Common myeloid progenitor, CD34-positive (primary cell): ENCODE measurements at regions of chr1 and their contacts with region 1.

Region 1: DNA sequence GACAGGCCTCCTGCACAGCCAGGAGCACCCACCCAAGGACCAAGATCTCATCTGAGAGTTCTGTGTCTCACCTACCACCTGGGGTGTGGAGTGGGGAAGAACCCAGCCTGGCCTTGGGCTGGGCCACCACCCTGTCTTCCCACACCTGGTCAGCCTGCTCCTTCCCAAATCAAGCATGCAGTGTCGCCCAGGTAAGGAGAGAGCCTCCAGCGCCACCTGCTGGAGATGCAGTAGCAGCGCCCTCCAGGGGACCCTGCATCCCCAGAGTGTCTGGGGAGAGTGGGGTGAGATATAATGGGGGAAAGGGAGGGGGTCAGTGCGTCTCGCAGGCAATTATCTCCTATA is 32.3 kb downstream of the KIAA2013 start:
- DNase-seq: peak; percentile 39 to 63 (median 51)
- H3K4me3 ChIP-seq: no peak overlapping the region
- H3K27ac ChIP-seq: no peak overlapping the region
- H3K4me1 ChIP-seq: no peaks in the 10 kb centered on the region
- H3K27me3 ChIP-seq: peaks cover 0 to 19% (median 14%) of the 10 kb centered on the region in 5 experiments

Region 2: GRCh38 chr1:11838349-11839272 is 55.3 kb before region 1 on chr1:
- CTCF ChIA-PET with region 1: interaction called, 97 read pairs
- POLR2A ChIA-PET with region 1: no interaction called
- DNase-seq: peak; percentile 56 to 78 (median 70)
- H3K4me3 ChIP-seq: no peak overlapping the region
- H3K27ac ChIP-seq: no peak overlapping the region
- H3K4me1 ChIP-seq: peaks cover 8 to 37% (median 33%) of the 10 kb centered on the region in 4 experiments
- H3K27me3 ChIP-seq: no peaks in the 10 kb centered on the region

Region 3: GRCh38 chr1:11845641-11846335 is 48.1 kb before region 1 on chr1:
- CTCF ChIA-PET with region 1: interaction called, 97 read pairs
- POLR2A ChIA-PET with region 1: no interaction called
- DNase-seq: peak; percentile 14 to 50 (median 43)
- H3K4me3 ChIP-seq: no peak overlapping the region
- H3K27ac ChIP-seq: no peak overlapping the region
- H3K4me1 ChIP-seq: peaks cover 8 to 44% (median 33%) of the 10 kb centered on the region in 4 experiments
- H3K27me3 ChIP-seq: no peaks in the 10 kb centered on the region

Region 4: GRCh38 chr1:11880911-11881748 is 12.7 kb before region 1 on chr1:
- CTCF ChIA-PET with region 1: interaction called, 10 read pairs
- POLR2A ChIA-PET with region 1: no interaction called
- DNase-seq: no peak
- H3K4me3 ChIP-seq: no peak overlapping the region
- H3K27ac ChIP-seq: no peak overlapping the region
- H3K4me1 ChIP-seq: peaks cover 0 to 8% (median 7%) of the 10 kb centered on the region in 4 experiments
- H3K27me3 ChIP-seq: peaks cover 0 to 2% (median 0%) of the 10 kb centered on the region in 5 experiments

Region 5: DNA sequence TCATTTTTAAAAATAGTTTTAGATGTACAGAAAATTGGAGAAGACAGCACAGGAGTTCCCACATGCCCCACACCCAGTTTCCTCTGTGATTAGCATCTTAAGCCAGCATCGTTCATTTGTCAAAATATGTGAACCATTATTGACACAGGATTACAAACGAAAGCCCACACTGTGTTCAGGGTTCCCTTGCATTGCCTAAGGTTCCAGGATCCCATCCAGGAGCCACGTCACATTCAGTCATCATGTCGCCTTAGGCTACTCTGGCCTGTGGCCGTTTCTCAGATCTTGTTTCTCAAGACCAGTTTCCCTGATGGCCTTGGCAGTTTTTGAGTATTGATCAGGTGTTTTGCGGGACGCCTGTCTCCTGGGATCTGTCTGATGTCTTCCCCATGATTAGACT is 238.2 kb after region 1 on chr1:
- CTCF ChIA-PET with region 1: no interaction called
- POLR2A ChIA-PET with region 1: no interaction called
- DNase-seq: no peak
- H3K4me3 ChIP-seq: no peak overlapping the region
- H3K27ac ChIP-seq: no peak overlapping the region
- H3K4me1 ChIP-seq: peaks cover 4 to 22% (median 14%) of the 10 kb centered on the region in 4 experiments
- H3K27me3 ChIP-seq: no peaks in the 10 kb centered on the region